ENCODE measurements at regions of chr12 and their contacts with region 1.

Region 1: GRCh38 chr12:6825398-6826124 is 2.6 kb upstream of the P3H3 start:
- DNase-seq: peak; percentile 71 to 88
- ATAC-seq: peak; percentile 79

Region 2: GRCh38 chr12:6735448-6736191 is 89.9 kb before region 1 on chr12:
- intact Hi-C with region 1: loop called in 1 of 2 experiments (anchors 5 kb)
- DNase-seq: peak; percentile 41 to 75
- ATAC-seq: peak; percentile 92

Region 3: DNA sequence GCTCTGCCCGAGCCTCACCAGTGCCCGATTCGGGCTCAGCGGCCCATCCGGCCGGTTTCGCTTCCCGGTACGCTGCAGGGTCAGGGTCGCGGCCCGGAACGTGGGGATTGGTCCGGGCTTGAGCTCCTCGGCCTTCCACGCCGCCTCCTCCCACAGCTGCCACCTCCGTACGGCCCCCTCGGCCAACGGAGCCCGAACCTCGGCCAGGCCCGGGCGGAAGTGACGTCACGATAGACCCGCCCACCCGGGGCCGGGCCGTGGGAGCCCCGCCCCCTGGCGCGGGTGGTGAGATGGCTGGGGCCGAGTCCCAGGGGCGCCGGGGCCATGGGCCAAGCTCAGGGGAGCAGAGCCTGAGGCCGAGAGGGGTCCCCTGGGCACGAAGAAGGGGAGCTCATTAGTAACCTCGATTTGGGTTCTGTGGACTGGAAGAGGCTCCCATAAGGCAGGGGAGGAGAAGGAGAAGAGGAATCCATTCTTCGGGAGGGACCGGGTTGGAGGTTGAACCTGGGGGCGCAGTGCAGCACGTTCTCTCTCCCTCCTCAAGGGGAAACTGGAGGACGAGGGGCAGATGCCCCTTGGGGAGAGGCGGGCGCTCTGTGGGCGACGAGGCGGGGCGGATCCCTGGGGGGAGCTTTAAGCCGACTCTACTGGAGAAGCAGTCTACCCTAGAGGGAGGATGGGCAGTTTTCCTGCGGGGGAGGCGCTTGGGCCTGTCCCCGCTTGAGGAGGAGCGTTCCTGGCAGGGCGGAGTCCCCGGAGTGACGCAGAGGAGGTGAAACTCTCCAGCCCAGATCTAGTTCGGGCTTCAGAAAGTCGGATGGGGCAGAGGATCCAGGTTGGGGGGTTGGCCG is 72.4 kb before region 1 on chr12 and contains the start of gene MLF2:
- intact Hi-C with region 1: loop called in 1 of 2 experiments (anchors 10 kb)
- DNase-seq: peak; percentile 98 to 99
- ATAC-seq: peak; percentile 91
- total RNA-seq, gene MLF2: 167 to 180 TPM